ENCODE measurements at regions of chr12 and their contacts with region 1.

Region 1: DNA sequence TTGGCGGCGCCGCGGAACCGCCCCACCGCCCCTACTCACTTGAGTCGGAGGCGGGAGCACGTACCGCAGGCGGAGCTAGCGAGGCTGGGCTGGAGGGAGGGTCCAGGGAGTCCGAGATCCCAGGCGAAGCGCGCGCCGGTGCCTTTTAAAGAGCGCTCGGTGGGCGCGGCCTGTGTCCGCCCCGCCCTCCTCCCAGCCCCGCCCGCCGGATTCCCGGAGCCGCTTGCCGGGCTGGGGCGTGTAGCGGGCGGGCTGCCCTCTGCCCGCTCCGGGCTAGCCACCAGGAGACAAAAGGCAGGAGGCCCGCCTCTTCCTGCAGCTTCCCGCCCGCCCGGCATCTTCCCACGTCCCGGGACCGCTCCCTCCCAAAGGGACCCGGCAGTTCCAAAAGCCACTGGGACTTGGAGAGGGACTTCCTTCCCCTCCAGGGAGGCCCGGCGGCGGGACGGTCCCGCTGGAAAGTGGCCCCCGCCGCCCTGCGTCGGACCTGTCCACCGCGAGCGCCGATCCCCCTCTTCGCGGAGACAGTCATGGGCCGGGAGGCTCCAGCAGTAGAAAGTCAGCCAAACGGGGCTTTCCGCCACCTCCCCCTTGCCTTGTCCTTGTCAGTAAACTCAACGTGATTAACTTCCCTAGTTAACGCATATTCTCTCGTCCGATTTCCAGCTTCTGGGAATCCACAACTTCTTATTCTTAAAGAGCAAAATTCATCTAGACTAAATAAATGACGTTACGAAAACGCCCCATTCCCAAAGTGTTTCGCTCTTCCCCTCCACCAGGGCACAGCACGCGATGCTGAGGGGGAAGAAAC is at the start of gene CSRP2:
- DNase-seq: peak; percentile 80
- H3K4me3 Mint-ChIP-seq: peak within 1 kb of the TSS; percentile 83
- H3K27ac Mint-ChIP-seq: no peak within 1 kb of the TSS
- H3K4me1 Mint-ChIP-seq: peaks cover 2% of the 10 kb centered on the region
- H3K27me3 Mint-ChIP-seq: peaks cover 47% of the 10 kb centered on the region
- total RNA-seq, gene CSRP2: 0.33 to 0.41 TPM

Region 2: GRCh38 chr12:76763743-76764675 is 115.1 kb before region 1 on chr12 and contains the start of gene ZDHHC17:
- CTCF ChIA-PET with region 1: interaction called, 3 read pairs
- POLR2A ChIA-PET with region 1: interaction called, 3 read pairs
- intact Hi-C with region 1: loop called (anchors 2 kb)
- DNase-seq: peak; percentile 93
- H3K4me3 Mint-ChIP-seq: peak within 1 kb of the TSS; percentile 99
- H3K27ac Mint-ChIP-seq: peak within 1 kb of the TSS; percentile 93
- H3K4me1 Mint-ChIP-seq: peaks cover 34% of the 10 kb centered on the region
- H3K27me3 Mint-ChIP-seq: no peaks in the 10 kb centered on the region
- total RNA-seq, gene ZDHHC17: 18.8 to 20.0 TPM

Region 3: DNA sequence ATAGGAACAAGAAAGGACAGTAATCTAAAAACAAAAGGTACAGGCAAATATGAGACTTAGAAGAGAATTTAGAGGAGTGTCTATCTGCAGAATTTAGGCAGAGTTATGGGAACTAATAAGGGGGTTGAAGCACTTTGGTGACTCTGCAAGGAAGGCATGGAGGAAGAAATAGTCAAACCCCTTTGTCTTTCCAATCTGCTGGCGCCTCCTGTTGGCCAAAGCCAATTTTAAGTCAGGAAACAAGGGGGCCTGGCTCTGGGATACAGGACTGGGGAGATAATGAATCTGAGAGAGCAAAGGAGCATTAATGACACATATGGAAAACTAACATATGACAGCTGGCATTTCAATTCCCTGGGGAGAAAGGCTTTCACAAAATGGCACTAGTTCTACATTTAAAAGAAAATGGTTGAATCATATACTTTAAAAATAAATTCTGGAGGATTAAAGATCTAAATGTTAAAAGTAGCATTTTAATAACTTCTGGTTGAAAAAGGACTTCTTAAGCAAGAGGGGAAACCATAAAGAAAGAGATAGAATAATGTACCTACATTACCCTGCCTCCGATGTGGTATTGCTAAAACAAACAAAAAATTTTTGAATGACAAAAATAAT is 48.2 kb after region 1 on chr12:
- CTCF ChIA-PET with region 1: no interaction called
- POLR2A ChIA-PET with region 1: no interaction called
- intact Hi-C with region 1: loop called (anchors 5 kb)
- DNase-seq: peak; percentile 50
- H3K4me3 Mint-ChIP-seq: no peak overlapping the region
- H3K27ac Mint-ChIP-seq: no peak overlapping the region
- H3K4me1 Mint-ChIP-seq: no peaks in the 10 kb centered on the region
- H3K27me3 Mint-ChIP-seq: peaks cover 5% of the 10 kb centered on the region

Measured in activated CD4-positive, alpha-beta memory T cell treated with anti-CD3 and anti-CD28 coated beads for 36 hours (primary cell).